Left colon (tissue), 2 donors: ENCODE measurements at regions of chr5 and their contacts with region 1.

Region 1: DNA sequence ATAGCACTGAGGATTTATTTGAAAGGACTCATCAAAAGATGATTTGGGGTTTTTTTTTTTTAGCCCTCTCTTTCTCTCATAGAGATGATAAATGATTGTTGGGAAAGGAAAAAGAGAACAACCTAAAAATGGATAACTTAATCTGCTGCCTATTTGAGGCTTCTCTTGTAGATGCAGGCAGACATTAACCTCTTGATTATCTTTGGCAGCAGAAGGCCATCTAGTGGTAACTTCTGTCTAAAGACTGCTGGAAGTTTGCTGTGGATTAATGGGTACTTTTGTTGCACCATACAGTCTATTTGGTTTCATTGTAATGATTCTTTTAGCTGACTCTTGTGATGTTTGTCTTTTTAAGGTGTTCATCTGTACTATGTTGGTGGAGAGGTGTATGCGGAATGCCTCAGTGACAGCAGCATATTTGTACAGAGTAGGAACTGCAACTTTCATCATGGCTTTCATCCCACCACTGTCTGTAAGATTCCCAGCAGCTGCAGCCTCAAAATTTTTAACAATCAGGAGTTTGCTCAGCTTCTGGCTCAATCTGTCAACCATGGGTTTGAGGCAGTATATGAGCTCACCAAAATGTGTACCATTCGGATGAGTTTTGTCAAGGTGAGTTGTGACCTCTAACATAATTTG is 18.8 kb downstream of the SMIM32 start:
- DNase-seq: no peak
- ATAC-seq: peak; percentile 89

Region 2: DNA sequence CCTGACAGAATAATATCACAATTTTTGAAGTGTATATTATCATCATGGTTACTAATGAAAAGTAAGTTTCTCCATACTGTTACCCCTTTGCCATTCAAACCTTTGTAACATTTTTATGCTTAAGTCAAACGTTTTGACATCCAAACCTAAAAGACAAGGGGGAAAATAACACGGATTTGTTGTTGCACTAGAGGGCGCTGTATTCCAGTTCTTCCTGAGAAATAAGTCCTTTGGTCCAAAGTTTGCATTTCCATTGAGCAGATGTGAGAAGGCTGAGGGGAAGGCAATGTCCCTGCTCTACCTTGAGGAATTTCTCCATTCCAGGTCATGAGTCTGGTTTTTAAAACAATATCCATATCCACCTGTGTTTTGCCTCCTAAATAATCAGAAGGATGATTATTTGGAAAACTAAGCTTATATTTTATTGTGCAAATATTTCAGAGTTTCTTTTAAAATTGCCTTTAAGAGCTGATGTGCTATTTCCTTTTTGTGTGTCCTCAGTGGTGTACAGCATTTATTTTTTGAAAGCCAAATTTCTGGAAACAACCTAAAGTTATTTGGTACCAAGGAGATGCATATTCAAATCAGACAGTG is 229.1 kb before region 1 on chr5:
- intact Hi-C with region 1: loop called in 1 of 2 experiments (anchors 10 kb)
- DNase-seq: peak; percentile 34 to 51
- ATAC-seq: peak; percentile 63

Region 3: GRCh38 chr5:136062366-136063274 is 111.5 kb before region 1 on chr5:
- intact Hi-C with region 1: loop called in 1 of 2 experiments (anchors 10 kb)
- DNase-seq: peak in 1 of 2 donors; percentile 38
- ATAC-seq: peak; percentile 82

Region 4: GRCh38 chr5:136087961-136088871 is 85.9 kb before region 1 on chr5:
- intact Hi-C with region 1: no loop called
- DNase-seq: peak; percentile 81 to 91
- ATAC-seq: peak; percentile 91

Region 5: DNA sequence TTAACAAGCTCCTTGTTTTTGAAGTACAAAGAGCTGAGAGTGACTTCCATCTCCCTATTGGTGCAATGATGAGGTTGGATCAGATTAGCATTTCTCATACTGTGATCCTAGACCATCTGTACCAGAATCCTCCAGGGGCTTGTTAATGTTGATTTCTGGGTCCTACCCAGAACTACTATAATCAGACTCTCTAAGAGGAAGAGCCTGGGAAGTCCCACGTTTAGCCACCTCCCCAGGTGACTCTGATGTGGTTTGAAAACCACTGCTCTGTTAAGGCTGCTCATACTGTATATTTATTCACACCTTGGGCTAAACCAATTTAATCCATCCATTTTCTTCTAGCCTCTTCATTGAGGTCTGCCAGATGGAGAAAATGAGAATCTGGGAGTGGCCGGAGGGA is 68.5 kb after region 1 on chr5:
- intact Hi-C with region 1: no loop called
- DNase-seq: no peak
- ATAC-seq: no peak

Region 6: GRCh38 chr5:136258463-136258862 is 84.3 kb after region 1 on chr5:
- intact Hi-C with region 1: no loop called
- DNase-seq: no peak
- ATAC-seq: no peak